SK-N-SH (cell line): ENCODE measurements at regions of chr10 and their contacts with region 1.

Region 1: GRCh38 chr10:103564776-103565520 is 71.4 kb downstream of the NEURL1 start:
- DNase-seq: peak; percentile 83
- H3K4me3 ChIP-seq: no peak overlapping the region
- H3K27ac ChIP-seq: no peak overlapping the region
- H3K4me1 ChIP-seq: peaks cover 0 to 24% of the 10 kb centered on the region in 2 experiments; a peak in 1 of 4 replicates
- H3K27me3 ChIP-seq: no peaks in the 10 kb centered on the region; the same call in 1 of the 2 replicates
- CTCF ChIP-seq: peak; percentile 68
- EP300 ChIP-seq: no peak
- RAD21 ChIP-seq: peak; percentile 63

Region 2: GRCh38 chr10:103491493-103492381 is 73.2 kb before region 1 on chr10:
- CTCF ChIA-PET with region 1: interaction called, 27 read pairs
- POLR2A ChIA-PET with region 1: no interaction called
- DNase-seq: peak; percentile 86
- H3K4me3 ChIP-seq: no peak overlapping the region
- H3K27ac ChIP-seq: peak overlapping the region; percentile 21 to 76; a peak in 3 of 4 replicates
- H3K4me1 ChIP-seq: peaks cover 0 to 32% of the 10 kb centered on the region in 2 experiments; a peak in 2 of 4 replicates
- H3K27me3 ChIP-seq: peaks cover 30% of the 10 kb centered on the region
- CTCF ChIP-seq: no peak
- EP300 ChIP-seq: peak in 1 of 2 experiments; percentile 23; a peak in 1 of 4 replicates
- RAD21 ChIP-seq: no peak

Region 3: GRCh38 chr10:103504181-103504783 is 60.7 kb before region 1 on chr10:
- CTCF ChIA-PET with region 1: interaction called, 11 read pairs
- POLR2A ChIA-PET with region 1: interaction called, 3 read pairs
- DNase-seq: peak; percentile 27
- H3K4me3 ChIP-seq: no peak overlapping the region
- H3K27ac ChIP-seq: peak overlapping the region in 1 of 2 experiments; percentile 48; a peak in 2 of 4 replicates
- H3K4me1 ChIP-seq: peaks cover 6 to 40% of the 10 kb centered on the region in 2 experiments; a peak in 3 of 4 replicates
- H3K27me3 ChIP-seq: peaks cover 15% of the 10 kb centered on the region
- CTCF ChIP-seq: no peak
- EP300 ChIP-seq: peak in 1 of 2 experiments; percentile 37; a peak in 1 of 4 replicates
- RAD21 ChIP-seq: no peak

Region 4: DNA sequence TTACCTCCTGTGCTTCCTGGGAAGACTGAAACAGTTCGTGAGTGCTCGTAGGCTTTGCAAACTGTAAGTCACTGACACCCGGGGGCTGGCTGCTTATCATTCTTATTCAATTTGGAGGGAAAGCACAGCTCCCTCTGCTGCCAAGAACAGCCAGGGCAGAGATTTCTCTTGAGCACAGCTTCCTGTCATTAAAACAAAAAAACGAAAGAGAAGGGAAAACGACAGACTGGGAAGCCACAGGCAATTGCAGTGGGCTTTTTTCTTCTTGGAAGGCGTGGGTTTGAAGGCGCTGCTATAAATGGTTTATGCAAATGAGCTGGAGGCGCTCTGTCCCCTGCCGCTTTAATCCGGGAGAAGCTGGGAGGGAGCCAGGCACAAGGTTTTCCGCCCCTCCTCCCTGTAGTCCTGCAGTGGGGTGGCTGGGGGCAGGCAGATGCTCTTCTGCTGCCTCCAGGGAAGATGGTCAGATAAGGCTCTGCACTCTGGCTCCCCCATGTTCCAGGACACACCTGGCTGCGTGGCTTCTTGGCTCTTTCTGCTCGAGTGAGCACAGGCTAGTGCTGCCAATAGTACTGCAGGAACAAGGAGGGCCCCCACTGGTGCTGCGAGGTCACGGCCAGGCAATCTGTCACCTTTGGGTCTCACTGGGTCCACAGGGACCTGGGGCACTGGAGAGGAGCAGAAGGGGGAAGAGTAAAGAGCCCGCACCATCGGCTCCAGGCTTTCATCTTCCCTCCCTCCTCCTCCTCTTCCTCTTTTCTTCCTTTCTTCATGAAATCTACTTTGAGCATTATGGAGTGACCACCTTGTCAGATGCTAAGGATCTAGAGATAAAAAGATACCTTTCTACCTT is 22.0 kb before region 1 on chr10:
- CTCF ChIA-PET with region 1: interaction called, 18 read pairs
- POLR2A ChIA-PET with region 1: interaction called, 3 read pairs
- DNase-seq: peak; percentile 82
- H3K4me3 ChIP-seq: peak overlapping the region; percentile 32 to 63; a peak in 3 of 4 replicates
- H3K27ac ChIP-seq: peak overlapping the region in 1 of 2 experiments; percentile 91; a peak in 2 of 4 replicates
- H3K4me1 ChIP-seq: peaks cover 8 to 43% of the 10 kb centered on the region in 2 experiments; a peak in 3 of 4 replicates
- H3K27me3 ChIP-seq: peaks cover 15% of the 10 kb centered on the region; the same call in 1 of the 2 replicates
- CTCF ChIP-seq: peak; percentile 60
- EP300 ChIP-seq: peak in 1 of 2 experiments; percentile 74; a peak in 2 of 4 replicates
- RAD21 ChIP-seq: peak; percentile 54

Region 5: GRCh38 chr10:103551624-103552592 is 13.0 kb before region 1 on chr10:
- CTCF ChIA-PET with region 1: interaction called, 21 read pairs
- POLR2A ChIA-PET with region 1: no interaction called
- DNase-seq: peak; percentile 66
- H3K4me3 ChIP-seq: no peak overlapping the region
- H3K27ac ChIP-seq: peak overlapping the region in 1 of 2 experiments; percentile 71; a peak in 2 of 4 replicates
- H3K4me1 ChIP-seq: peaks cover 0 to 67% of the 10 kb centered on the region in 2 experiments; a peak in 1 of 4 replicates
- H3K27me3 ChIP-seq: peaks cover 9% of the 10 kb centered on the region; the same call in 1 of the 2 replicates
- CTCF ChIP-seq: no peak
- EP300 ChIP-seq: no peak
- RAD21 ChIP-seq: no peak

Region 6: GRCh38 chr10:103578782-103579382 is 13.9 kb after region 1 on chr10:
- CTCF ChIA-PET with region 1: interaction called, 23 read pairs
- POLR2A ChIA-PET with region 1: interaction called, 3 read pairs
- DNase-seq: no peak
- H3K4me3 ChIP-seq: no peak overlapping the region
- H3K27ac ChIP-seq: no peak overlapping the region
- H3K4me1 ChIP-seq: peaks cover 0 to 15% of the 10 kb centered on the region in 2 experiments; a peak in 1 of 4 replicates
- H3K27me3 ChIP-seq: no peaks in the 10 kb centered on the region; the same call in 1 of the 2 replicates
- CTCF ChIP-seq: no peak
- EP300 ChIP-seq: no peak
- RAD21 ChIP-seq: no peak

Region 7: GRCh38 chr10:103592186-103593021 is 27.5 kb after region 1 on chr10:
- CTCF ChIA-PET with region 1: interaction called, 27 read pairs
- POLR2A ChIA-PET with region 1: no interaction called
- DNase-seq: peak; percentile 91
- H3K4me3 ChIP-seq: no peak overlapping the region; a peak in 1 of 4 replicates
- H3K27ac ChIP-seq: peak overlapping the region in 1 of 2 experiments; percentile 7; a peak in 1 of 4 replicates
- H3K4me1 ChIP-seq: peaks cover 0 to 15% of the 10 kb centered on the region in 2 experiments; a peak in 1 of 4 replicates
- H3K27me3 ChIP-seq: no peaks in the 10 kb centered on the region
- CTCF ChIP-seq: peak; percentile 71
- EP300 ChIP-seq: no peak
- RAD21 ChIP-seq: peak; percentile 79

Region 8: GRCh38 chr10:103659674-103660363 is 94.9 kb after region 1 on chr10:
- CTCF ChIA-PET with region 1: no interaction called
- POLR2A ChIA-PET with region 1: no interaction called
- DNase-seq: no peak
- H3K4me3 ChIP-seq: no peak overlapping the region
- H3K27ac ChIP-seq: no peak overlapping the region
- H3K4me1 ChIP-seq: peaks cover 0 to 10% of the 10 kb centered on the region in 2 experiments; a peak in 1 of 4 replicates
- H3K27me3 ChIP-seq: no peaks in the 10 kb centered on the region
- CTCF ChIP-seq: no peak
- EP300 ChIP-seq: no peak
- RAD21 ChIP-seq: no peak